Activated CD4-positive, alpha-beta memory T cell treated with anti-CD3 and anti-CD28 coated beads for 36 hours (primary cell): ENCODE measurements at regions of chr4 and their contacts with region 1.

Region 1: DNA sequence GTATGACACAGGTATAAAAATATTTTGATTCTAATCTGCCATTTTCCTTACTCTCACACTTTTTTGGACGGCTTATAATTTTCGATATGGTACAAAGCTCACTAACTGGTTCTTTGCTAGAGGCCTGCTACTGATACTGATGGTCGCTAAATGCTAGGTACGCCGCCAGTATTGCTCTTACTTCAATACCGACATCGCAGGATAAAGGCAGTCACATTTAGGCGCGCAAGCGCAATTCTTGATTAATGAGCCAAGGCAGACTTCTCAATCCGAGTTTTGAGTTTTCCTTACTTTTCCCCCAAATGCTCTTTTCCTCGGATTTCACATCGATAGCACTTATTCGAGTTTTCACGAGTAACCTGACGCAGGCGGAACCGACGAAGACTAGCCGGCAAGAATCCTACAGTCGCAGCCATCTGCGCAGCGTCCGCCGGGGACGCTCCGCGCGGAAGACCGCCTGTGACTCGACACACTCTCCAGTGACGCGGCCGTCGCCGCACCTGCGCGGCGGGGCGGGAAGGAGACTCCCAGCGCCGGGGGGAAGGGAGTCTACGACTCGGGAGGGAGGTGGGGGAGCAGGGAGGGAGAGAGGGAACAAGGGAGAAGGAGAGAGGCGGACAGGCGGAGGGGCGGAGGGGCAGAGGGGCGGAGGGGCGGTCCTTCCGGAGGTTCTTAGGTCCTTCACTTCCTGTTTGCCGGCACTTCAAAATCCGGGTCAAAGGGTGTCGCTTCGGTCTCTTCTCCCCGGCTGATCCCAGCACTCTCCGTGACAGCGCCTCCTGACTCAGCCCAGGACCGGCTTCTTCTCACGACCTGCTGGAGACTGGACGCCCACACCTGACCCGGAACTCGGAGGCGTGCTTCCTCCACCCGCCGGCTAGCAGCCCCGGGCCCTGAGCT is at the start of gene USP38:
- DNase-seq: peak; percentile 96
- H3K4me3 Mint-ChIP-seq: peak within 1 kb of the TSS; percentile 87
- H3K27ac Mint-ChIP-seq: peak within 1 kb of the TSS; percentile 94
- H3K4me1 Mint-ChIP-seq: peaks cover 28% of the 10 kb centered on the region
- H3K27me3 Mint-ChIP-seq: no peaks in the 10 kb centered on the region
- total RNA-seq, gene USP38: 21.7 to 22.0 TPM

Region 2: DNA sequence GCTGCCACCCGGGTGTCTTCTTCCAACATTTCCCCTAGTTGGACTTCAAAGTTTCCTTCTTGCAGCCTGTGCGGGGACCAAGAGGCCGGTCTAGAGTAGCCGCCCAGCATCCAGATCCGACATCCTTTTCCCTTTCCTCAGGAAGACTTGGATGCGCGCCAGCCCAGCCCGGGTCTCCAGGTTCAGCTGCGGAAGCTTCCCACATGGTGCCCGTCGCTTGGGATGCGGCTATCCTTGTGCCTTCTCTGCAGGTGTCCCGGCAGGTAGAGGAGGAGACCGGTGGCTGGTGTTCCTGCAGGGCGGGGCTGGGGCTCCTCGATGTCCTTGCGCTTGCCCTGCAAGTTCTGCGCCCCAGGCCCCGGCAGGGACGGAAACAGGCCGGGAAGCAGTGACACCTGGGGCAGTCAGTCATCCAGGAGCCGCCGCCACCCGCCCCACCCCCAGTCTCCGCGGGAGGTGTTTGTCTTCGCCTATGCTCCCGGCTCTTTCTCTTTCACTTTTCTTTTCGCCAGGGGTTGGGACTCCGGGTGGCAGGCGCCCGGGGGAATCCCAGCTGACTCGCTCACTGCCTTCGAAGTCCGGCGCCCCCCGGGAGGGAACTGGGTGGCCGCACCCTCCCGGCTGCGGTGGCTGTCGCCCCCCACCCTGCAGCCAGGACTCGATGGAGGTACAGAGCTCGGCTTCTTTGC is 1548.2 kb before region 1 on chr4 and contains the start of gene IL15:
- CTCF ChIA-PET with region 1: no interaction called
- POLR2A ChIA-PET with region 1: no interaction called
- intact Hi-C with region 1: loop called (anchors 2 kb)
- DNase-seq: peak; percentile 86
- H3K4me3 Mint-ChIP-seq: peak within 1 kb of the TSS; percentile 88
- H3K27ac Mint-ChIP-seq: peak within 1 kb of the TSS; percentile 64
- H3K4me1 Mint-ChIP-seq: peaks cover 27% of the 10 kb centered on the region
- H3K27me3 Mint-ChIP-seq: peaks cover 2% of the 10 kb centered on the region
- total RNA-seq, gene IL15: 1.4 to 2.2 TPM

Region 3: DNA sequence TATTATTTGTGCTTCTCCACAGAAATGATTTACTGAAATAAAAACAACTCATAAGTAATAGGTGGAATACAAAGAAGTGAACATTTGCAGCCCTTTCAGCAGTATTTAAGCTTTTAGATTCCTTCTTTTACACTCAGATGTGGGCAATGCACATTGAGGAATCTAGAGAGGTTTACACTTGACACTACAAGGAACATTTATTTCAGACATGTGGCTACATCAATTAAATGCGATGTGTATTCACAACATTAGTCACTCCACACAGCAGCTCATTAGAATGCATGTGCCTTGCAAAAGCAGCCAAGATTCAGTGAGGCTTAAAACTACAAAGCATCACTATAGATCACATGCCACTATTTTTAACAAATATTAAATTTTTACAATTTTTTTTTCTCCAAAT is 819.1 kb before region 1 on chr4:
- CTCF ChIA-PET with region 1: no interaction called
- POLR2A ChIA-PET with region 1: no interaction called
- intact Hi-C with region 1: loop called (anchors 10 kb)
- DNase-seq: no peak
- H3K4me3 Mint-ChIP-seq: no peak overlapping the region
- H3K27ac Mint-ChIP-seq: peak overlapping the region; percentile 77
- H3K4me1 Mint-ChIP-seq: peaks cover 73% of the 10 kb centered on the region
- H3K27me3 Mint-ChIP-seq: no peaks in the 10 kb centered on the region

Region 4: GRCh38 chr4:142713282-142714030 is 471.0 kb before region 1 on chr4:
- CTCF ChIA-PET with region 1: no interaction called
- POLR2A ChIA-PET with region 1: no interaction called
- intact Hi-C with region 1: loop called (anchors 5 kb)
- DNase-seq: no peak
- H3K4me3 Mint-ChIP-seq: peak overlapping the region; percentile 17
- H3K27ac Mint-ChIP-seq: peak overlapping the region; percentile 87
- H3K4me1 Mint-ChIP-seq: peaks cover 61% of the 10 kb centered on the region
- H3K27me3 Mint-ChIP-seq: no peaks in the 10 kb centered on the region

Region 5: DNA sequence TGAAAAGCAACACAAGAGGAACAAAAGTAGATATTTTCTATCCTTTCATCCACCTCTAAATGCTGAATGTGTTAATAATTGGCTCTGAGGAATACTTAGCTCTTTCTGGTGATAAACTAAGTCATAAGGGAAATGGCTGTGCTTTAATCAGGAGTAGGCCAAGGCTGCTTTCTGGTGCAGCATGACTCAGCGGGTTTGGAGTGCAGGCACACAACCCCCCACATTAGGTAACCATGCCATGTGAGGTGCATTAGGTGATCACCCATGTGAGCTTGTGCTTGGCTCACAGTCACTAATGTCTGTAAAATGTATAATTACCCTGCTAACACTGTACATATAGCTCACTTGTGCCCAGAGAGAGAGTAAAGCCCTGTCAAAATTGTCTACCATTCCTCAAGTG is 57.4 kb after region 1 on chr4:
- CTCF ChIA-PET with region 1: no interaction called
- POLR2A ChIA-PET with region 1: no interaction called
- intact Hi-C with region 1: no loop called
- DNase-seq: no peak
- H3K4me3 Mint-ChIP-seq: no peak overlapping the region
- H3K27ac Mint-ChIP-seq: no peak overlapping the region
- H3K4me1 Mint-ChIP-seq: no peaks in the 10 kb centered on the region
- H3K27me3 Mint-ChIP-seq: peaks cover 2% of the 10 kb centered on the region

Region 6: DNA sequence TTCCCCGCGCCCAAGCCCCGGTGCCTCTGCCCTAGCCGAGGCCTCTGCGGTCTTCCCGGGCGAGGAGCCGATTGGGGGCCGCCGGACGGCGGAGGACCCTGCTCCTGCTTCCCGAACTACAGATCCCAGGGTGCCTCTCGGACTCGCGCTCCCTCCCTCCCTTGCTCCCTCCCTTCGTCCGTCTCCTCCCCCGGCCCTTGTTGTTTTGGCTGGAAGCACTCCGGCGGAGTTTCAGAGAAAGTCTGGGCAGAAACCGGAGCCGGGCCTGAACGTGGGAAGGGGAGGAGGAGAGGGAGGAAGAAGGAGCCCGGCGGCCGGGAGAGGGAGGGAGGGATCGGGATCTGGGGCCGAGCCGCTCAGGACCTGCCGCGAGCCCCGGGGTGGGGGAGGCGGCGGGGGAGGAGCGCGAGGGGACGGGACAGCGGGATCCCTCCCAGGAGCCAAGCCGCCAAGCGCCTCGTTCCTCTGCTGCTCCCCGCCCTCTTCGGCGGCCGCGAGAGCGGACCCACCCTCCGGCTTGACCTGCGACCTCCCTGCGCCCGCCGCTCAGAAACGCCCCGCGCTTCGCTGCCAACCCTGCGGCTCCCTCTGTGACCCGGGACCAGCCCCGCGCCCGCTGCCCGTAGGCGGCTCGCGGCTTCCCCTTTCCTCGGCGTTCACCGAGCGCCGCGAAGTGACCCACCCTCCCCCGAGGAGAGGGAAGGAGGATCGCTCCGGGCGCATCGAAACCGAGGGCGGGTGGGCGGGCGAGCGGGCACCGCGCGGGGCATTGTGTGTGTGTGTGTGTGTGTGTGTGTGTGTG is 151.7 kb after region 1 on chr4:
- CTCF ChIA-PET with region 1: no interaction called
- POLR2A ChIA-PET with region 1: no interaction called
- intact Hi-C with region 1: loop called (anchors 2 kb)
- DNase-seq: peak; percentile 42
- H3K4me3 Mint-ChIP-seq: peak overlapping the region; percentile 72
- H3K27ac Mint-ChIP-seq: no peak overlapping the region
- H3K4me1 Mint-ChIP-seq: peaks cover 8% of the 10 kb centered on the region
- H3K27me3 Mint-ChIP-seq: peaks cover 39% of the 10 kb centered on the region

Region 7: DNA sequence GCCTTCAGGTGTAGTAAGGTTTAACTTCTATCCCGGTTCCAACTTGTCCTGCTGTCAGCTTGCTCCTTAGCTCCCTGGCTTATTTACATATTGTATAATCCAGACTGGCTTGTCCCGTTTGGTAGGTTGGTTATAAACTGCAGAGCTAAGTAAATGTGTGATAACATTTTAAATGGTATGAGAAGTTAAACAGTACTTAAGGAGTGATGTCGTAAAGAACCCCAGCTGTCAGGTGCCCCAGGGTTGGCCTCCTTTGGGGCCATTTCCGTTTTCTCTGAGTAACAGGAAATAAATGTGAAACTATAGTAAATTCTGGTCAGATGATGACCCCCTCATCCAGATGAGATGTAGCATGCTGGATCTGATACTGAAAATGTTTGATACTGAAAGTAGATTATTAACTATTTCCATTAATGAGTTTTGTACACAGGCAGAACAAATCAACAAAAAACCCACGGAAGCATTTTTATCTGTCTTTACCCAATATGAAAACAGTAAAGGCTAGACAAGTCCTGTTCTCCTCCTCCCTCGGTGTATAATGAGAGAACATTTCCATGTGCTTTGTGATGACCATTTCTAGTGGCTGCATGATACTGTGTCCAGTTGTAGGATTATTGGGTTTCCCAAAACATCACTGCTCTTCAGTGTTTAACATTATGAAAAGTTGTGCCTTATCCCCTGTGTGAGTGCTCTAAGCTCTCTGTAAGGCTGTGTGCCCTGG is 174.6 kb after region 1 on chr4:
- CTCF ChIA-PET with region 1: no interaction called
- POLR2A ChIA-PET with region 1: no interaction called
- intact Hi-C with region 1: loop called (anchors 2 kb)
- DNase-seq: peak; percentile 68
- H3K4me3 Mint-ChIP-seq: no peak overlapping the region
- H3K27ac Mint-ChIP-seq: peak overlapping the region; percentile 77
- H3K4me1 Mint-ChIP-seq: peaks cover 23% of the 10 kb centered on the region
- H3K27me3 Mint-ChIP-seq: no peaks in the 10 kb centered on the region